B cell (primary cell): ENCODE measurements at regions of chr17 and their contacts with region 1.

Region 1: DNA sequence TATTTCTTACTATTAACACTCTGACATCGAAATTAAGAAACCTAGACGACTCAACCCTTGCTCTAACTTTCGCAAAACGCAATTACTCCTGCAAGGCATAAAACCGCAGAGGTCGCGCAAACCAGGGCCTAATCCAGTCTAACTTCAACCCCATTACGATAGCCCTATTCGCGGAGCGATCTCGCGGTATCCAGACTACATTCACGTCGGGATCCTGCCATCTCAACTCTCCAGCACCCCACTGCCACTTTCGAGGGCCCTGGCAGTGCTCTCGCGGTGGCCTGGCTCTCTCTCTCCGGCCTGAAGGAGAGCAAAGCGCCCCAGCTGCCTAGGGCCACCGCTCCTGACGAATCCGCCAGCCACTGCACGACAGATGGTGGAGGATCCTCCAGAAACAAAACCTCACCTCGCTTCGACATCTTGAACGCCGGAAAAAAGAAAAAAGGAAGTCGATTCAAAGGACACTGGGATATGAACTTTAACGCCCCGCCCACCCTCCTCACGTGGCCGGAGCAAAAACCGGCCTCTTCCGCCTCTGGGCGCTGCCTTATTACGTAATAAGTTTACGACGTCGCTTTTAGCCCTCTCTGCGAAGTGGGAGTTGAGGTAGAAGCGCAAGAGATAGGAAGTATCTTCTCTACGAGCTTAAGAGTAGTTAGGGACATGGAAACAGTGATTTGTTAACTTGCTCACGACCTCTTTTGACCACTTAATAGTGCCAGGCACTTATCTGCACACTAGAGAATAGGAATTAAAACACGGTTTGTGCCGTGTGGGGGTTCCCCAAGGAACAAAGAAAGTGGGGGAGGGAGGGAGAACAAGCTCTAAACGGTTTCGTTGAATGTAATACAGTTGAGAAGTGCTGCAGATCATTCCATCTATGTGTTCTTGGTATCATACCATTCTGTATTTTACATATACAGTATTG is at the start of gene RPL23:
- DNase-seq: peak; percentile 98
- ATAC-seq: peak; percentile 91
- H3K4me3 ChIP-seq: peak within 1 kb of the TSS; percentile 70 to 99 (median 73)
- H3K4me3 Mint-ChIP-seq: peak within 1 kb of the TSS; percentile 98
- H3K27ac ChIP-seq: peak within 1 kb of the TSS; percentile 92
- H3K27ac Mint-ChIP-seq: peak within 1 kb of the TSS; percentile 100
- H3K4me1 ChIP-seq: peaks cover 23 to 27% of the 10 kb centered on the region in 2 donors
- H3K4me1 Mint-ChIP-seq: peaks cover 41% of the 10 kb centered on the region
- H3K27me3 ChIP-seq: no peaks in the 10 kb centered on the region
- H3K27me3 Mint-ChIP-seq: no peaks in the 10 kb centered on the region
- CTCF ChIP-seq: no peak
- total RNA-seq, gene RPL23: 1,692 and 1,753 TPM in 2 replicates

Region 2: GRCh38 chr17:38799378-38800236 is 53.9 kb before region 1 on chr17 and contains the start of gene PIP4K2B:
- CTCF ChIA-PET with region 1: no interaction called
- POLR2A ChIA-PET with region 1: interaction called, 6 read pairs
- intact Hi-C with region 1: loop called (anchors 1 kb)
- DNase-seq: peak; percentile 94
- ATAC-seq: peak; percentile 84
- H3K4me3 ChIP-seq: peak within 1 kb of the TSS; percentile 64 to 88 (median 75)
- H3K4me3 Mint-ChIP-seq: peak within 1 kb of the TSS; percentile 99
- H3K27ac ChIP-seq: peak within 1 kb of the TSS; percentile 72 to 79
- H3K27ac Mint-ChIP-seq: peak within 1 kb of the TSS; percentile 96
- H3K4me1 ChIP-seq: peaks cover 17 to 25% of the 10 kb centered on the region in 2 donors
- H3K4me1 Mint-ChIP-seq: peaks cover 34% of the 10 kb centered on the region
- H3K27me3 ChIP-seq: no peaks in the 10 kb centered on the region
- H3K27me3 Mint-ChIP-seq: no peaks in the 10 kb centered on the region
- CTCF ChIP-seq: no peak
- total RNA-seq, gene PIP4K2B: 42.9 and 46.8 TPM in 2 replicates

Region 3: DNA sequence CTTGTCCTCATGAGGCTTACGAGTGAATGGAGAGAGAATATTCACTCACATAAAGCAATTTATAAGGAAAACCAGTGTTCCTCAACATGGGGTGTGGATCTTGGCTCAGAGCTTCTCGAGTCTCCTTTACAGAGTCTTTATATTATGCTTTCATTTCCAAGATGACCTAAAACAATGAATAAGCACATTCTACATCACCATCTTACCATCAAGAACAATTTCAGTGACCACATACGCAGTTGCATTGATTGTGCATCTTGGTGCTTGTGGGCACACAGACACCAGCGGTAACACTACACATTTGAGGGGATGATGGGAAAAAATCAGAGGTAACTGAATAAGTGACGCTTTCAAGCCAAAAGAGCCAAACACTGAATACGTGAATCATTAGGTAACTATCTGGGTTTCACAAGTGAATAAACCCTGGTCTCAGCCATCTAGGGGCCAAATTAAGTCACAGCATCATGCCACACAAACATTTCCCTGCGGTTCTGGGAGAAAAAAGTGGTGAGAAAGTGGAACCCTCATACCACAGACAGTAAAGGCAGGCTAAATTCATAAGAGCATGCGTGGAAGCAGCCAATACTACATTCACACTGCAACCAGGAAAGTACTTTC is 37.9 kb before region 1 on chr17:
- CTCF ChIA-PET with region 1: no interaction called
- POLR2A ChIA-PET with region 1: interaction called, 10 read pairs
- intact Hi-C with region 1: no loop called
- DNase-seq: no peak
- ATAC-seq: no peak
- H3K4me3 ChIP-seq: no peak overlapping the region
- H3K4me3 Mint-ChIP-seq: no peak overlapping the region
- H3K27ac ChIP-seq: no peak overlapping the region
- H3K27ac Mint-ChIP-seq: no peak overlapping the region
- H3K4me1 ChIP-seq: no peaks in the 10 kb centered on the region
- H3K4me1 Mint-ChIP-seq: peaks cover 3% of the 10 kb centered on the region
- H3K27me3 ChIP-seq: no peaks in the 10 kb centered on the region
- H3K27me3 Mint-ChIP-seq: no peaks in the 10 kb centered on the region
- CTCF ChIP-seq: peak; percentile 25

Region 4: DNA sequence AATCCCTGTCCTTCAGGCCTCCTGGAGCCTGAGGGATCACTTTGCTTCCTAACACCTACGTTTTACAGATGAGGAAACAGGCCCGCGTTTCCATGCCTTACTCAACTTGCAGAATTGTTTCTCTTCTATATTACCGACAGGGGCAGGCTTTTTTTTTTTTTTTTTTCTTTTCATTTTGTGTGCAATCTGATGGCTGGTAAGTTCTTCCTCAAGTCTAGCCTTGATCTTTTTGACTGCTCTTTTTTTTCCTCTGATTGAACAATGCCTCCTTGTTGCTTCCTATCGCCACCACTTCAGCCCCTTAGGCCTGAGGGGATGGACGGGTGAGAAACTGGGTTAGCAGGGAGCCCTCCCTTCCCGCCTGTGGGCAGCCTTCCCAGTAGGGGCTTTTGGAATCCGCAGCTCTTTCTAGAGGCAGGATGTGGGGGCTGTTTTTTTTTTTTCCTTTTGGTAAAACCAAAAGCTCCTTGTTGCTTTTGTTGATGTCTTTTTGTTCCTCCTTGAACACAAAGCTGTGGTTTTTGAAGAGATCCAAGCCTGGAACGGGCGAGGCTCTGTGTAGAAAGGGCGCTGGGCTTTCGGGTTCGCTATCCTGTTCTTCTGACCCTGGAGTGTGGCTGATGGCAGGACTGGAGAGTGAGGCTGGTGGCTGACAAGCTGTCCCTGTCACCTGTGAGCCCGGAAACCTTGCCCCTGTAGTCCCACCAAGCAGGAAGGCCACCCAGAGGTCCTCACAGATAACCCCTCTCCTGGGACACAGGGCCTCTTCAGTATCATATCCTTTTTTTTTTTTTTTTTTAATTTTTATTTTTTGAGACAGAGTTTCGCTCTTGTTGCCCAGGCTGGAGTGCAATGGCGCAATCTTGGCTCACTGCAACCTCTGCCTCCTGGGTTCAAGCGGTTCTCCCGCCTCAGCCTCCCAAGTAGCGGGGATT is 30.3 kb after region 1 on chr17:
- CTCF ChIA-PET with region 1: no interaction called
- POLR2A ChIA-PET with region 1: no interaction called
- intact Hi-C with region 1: no loop called
- DNase-seq: peak; percentile 49
- ATAC-seq: peak; percentile 53
- H3K4me3 ChIP-seq: peak overlapping the region in 1 of 5 experiments; percentile 19
- H3K4me3 Mint-ChIP-seq: peak overlapping the region; percentile 61
- H3K27ac ChIP-seq: peak overlapping the region in 1 of 2 donors; percentile 69
- H3K27ac Mint-ChIP-seq: peak overlapping the region; percentile 79
- H3K4me1 ChIP-seq: peaks cover 36 to 62% of the 10 kb centered on the region in 2 donors
- H3K4me1 Mint-ChIP-seq: peaks cover 61% of the 10 kb centered on the region
- H3K27me3 ChIP-seq: no peaks in the 10 kb centered on the region
- H3K27me3 Mint-ChIP-seq: no peaks in the 10 kb centered on the region
- CTCF ChIP-seq: no peak